ENCODE measurements at regions of chr17 and their contacts with region 1.

Region 1: DNA sequence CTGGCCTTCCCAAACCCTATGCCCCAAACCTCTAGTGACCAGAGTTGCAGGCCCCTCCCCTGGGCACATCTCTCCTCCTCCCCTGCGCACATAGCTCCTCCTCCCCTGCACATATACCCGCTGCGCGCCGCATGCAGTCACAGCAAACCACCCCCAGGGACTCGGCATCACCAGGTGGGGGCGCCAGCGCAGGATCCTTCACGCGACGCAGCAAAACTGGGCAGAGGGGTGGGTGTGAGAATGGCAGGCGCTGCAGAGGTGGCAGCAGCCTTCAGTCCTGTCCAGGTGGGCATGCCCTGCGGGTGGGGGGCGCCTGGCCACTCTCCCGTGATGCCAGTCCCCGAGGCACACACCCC is 5.6 kb downstream of the CORO6 start:
- DNase-seq: peak; percentile 93
- ATAC-seq: peak; percentile 62
- H3K4me3 Mint-ChIP-seq: peak overlapping the region; percentile 82
- H3K27ac Mint-ChIP-seq: peak overlapping the region; percentile 94
- H3K4me1 Mint-ChIP-seq: peaks cover 28% of the 10 kb centered on the region
- H3K27me3 Mint-ChIP-seq: peaks cover 7% of the 10 kb centered on the region

Region 2: GRCh38 chr17:29568331-29569244 is 48.5 kb before region 1 on chr17 and contains the start of gene TP53I13:
- POLR2A ChIA-PET with region 1: interaction called, 55 read pairs
- DNase-seq: peak; percentile 88
- ATAC-seq: peak; percentile 57
- H3K4me3 Mint-ChIP-seq: peak within 1 kb of the TSS; percentile 98
- H3K27ac Mint-ChIP-seq: peak within 1 kb of the TSS; percentile 98
- H3K4me1 Mint-ChIP-seq: peaks cover 26% of the 10 kb centered on the region
- H3K27me3 Mint-ChIP-seq: no peaks in the 10 kb centered on the region
- total RNA-seq, gene TP53I13: 154 to 155 TPM

Region 3: DNA sequence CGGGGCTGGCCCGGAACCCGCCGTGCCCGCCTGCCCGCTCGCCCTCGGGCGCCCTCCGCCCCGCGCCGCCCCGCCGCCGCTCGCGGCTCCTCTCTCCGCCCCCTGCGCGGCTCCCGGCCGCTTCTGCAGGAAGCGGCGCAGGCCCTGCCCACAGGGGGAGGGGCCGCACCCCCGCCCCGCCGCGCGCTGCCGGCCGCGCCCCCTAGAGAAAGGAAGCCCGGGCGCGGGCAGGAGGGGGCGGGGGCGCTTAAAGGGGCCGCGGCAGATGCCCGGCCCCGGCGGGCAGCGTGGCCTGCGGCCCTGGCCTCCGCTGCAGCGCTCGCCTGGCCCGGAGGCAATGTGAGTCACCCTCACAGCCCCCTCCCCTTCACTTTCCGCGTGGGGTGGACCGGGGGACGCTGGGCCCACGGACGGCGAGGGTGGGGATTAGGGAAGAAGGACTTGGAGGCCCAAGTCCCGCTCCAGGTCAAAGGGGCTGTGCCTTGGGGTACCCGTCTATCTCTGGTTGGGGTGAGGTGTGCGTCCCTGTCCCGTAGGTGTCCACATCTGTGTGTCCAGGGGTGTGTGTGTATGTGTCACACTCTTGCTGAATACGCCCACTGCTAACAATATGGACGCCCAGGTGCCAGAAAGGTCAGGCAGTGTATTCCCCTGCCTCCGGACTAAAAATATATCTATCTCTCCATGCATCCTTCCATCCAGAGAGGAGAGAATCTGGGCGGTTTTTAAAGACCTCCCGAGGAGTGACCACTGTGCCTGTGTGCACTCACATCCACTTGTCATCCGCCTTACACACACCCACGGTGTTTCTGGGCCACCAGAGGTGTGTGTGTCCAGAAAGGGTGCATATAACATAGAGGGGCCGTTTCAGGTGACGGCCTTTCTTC is 27.3 kb before region 1 on chr17 and contains the start of gene GIT1:
- POLR2A ChIA-PET with region 1: interaction called, 20 read pairs
- DNase-seq: peak; percentile 92
- ATAC-seq: peak; percentile 64
- H3K4me3 Mint-ChIP-seq: peak within 1 kb of the TSS; percentile 97
- H3K27ac Mint-ChIP-seq: peak within 1 kb of the TSS; percentile 90
- H3K4me1 Mint-ChIP-seq: peaks cover 51% of the 10 kb centered on the region
- H3K27me3 Mint-ChIP-seq: no peaks in the 10 kb centered on the region
- total RNA-seq, gene GIT1: 73.3 to 73.4 TPM

Region 4: GRCh38 chr17:29705386-29705785 is 88.3 kb after region 1 on chr17:
- POLR2A ChIA-PET with region 1: interaction called, 20 read pairs
- DNase-seq: no peak
- ATAC-seq: no peak
- H3K4me3 Mint-ChIP-seq: peak overlapping the region; percentile 73
- H3K27ac Mint-ChIP-seq: peak overlapping the region; percentile 90
- H3K4me1 Mint-ChIP-seq: peaks cover 25% of the 10 kb centered on the region
- H3K27me3 Mint-ChIP-seq: no peaks in the 10 kb centered on the region

Region 5: DNA sequence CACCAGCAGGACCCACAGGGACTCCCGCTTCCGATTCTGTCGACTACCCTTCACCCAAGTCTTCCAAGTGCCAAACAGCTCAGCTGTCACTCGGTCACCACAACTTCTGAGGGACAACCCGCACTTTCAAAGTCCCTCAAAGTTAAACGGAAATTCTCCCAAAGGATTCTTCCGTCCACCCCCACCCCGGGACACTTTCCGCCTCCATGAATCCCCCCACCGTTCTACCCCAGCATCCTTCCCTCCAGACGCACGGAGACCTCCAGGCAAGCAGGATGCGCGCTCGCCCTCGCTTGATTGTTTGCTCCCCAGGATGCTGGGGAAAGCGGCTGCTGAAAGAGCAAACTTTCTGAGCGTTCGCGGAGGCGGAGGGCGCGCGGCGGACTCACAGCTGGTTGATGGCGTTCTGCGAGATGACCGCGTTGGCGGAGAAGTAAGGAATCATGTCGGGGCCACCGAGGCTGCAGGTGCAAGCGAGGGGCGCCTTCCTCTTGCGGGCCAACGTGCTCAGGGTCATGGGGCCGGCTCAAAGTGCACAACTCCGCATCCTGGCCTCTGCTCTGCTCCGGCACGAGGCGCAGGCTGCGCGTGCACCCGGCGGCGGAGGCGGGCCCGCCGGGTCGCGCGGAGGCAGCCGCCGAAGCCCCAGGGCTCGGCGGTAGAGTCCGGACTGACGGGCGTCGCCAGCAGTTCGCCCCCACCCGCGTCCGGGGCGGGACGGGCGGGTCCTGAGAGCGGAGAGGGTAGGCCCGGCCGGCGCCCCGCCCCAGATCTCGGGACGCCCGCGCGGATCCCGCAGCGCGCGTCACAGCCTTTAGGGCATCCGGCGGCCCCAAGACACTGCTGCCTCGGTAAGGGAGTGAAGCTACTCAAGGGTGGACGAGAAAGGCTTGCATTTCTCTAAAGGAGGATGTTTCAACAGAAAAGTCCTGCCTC is 143.9 kb after region 1 on chr17:
- POLR2A ChIA-PET with region 1: interaction called, 17 read pairs
- DNase-seq: peak; percentile 98
- ATAC-seq: peak; percentile 87
- H3K4me3 Mint-ChIP-seq: peak overlapping the region; percentile 96
- H3K27ac Mint-ChIP-seq: peak overlapping the region; percentile 93
- H3K4me1 Mint-ChIP-seq: peaks cover 21% of the 10 kb centered on the region
- H3K27me3 Mint-ChIP-seq: no peaks in the 10 kb centered on the region

Region 6: DNA sequence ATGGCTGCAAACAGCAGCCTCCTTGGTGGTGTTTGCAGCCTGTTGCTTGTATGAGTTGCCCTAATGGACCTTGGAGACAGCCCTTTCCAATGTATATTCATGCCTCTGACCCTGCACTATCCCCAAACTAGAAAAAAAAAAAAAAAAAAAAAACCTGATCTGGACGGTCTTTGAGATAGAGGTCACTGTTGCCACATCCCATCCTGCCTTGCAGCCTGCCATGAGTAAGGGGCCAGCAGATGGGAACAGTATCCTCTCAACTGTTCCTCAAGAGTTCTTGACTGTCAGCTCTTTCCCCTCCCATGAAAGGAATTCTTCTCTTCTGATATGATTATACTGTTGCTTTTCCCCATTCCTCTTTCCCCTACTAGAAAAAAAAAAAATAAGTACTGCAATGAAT is 160.6 kb after region 1 on chr17:
- POLR2A ChIA-PET with region 1: interaction called, 13 read pairs
- DNase-seq: no peak
- ATAC-seq: no peak
- H3K4me3 Mint-ChIP-seq: no peak overlapping the region
- H3K27ac Mint-ChIP-seq: no peak overlapping the region
- H3K4me1 Mint-ChIP-seq: peaks cover 6% of the 10 kb centered on the region
- H3K27me3 Mint-ChIP-seq: no peaks in the 10 kb centered on the region

Region 7: GRCh38 chr17:29931231-29931932 is 314.3 kb after region 1 on chr17:
- POLR2A ChIA-PET with region 1: interaction called, 22 read pairs
- DNase-seq: peak; percentile 53
- ATAC-seq: peak; percentile 74
- H3K4me3 Mint-ChIP-seq: no peak overlapping the region
- H3K27ac Mint-ChIP-seq: no peak overlapping the region
- H3K4me1 Mint-ChIP-seq: peaks cover 12% of the 10 kb centered on the region
- H3K27me3 Mint-ChIP-seq: peaks cover 3% of the 10 kb centered on the region